Activated CD4-positive, alpha-beta T cell treated with anti-CD3 and anti-CD28 coated beads, Interleukin-2, amount 10 ng/mL, durations not matched to agents 24 days and 14 days (primary cell): ENCODE measurements at regions of chr12 and their contacts with region 1.

Region 1: DNA sequence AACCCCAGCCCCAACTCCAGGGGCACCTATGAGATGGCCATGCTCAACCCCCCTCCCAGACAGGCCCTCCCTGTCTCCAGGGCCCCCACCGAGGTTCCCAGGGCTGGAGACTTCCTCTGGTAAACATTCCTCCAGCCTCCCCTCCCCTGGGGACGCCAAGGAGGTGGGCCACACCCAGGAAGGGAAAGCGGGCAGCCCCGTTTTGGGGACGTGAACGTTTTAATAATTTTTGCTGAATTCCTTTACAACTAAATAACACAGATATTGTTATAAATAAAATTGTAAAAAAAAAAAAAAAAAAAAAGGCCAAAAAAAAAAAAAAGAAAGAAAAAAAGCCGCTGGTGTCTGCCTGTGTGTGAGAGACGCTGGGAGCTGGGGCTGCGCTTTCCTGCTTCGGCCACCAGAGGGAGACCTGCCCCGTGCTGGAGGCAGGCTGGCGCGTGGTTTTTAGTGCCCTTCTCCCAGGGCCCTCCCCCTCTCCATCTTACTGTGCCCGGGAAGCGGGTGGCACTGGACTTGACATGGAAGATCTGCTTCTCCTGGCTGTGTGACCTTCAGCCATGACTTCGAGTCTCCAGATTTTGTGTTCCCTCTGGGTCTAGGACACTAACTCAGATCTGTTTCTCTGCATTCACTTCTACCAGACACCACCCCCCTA is 3.4 kb upstream of the NXPH4 start:
- DNase-seq: peak; percentile 95
- H3K4me3 Mint-ChIP-seq: peak overlapping the region; percentile 36
- H3K27ac Mint-ChIP-seq: no peak overlapping the region
- H3K4me1 Mint-ChIP-seq: peaks cover 22% of the 10 kb centered on the region
- H3K27me3 Mint-ChIP-seq: peaks cover 37% of the 10 kb centered on the region

Region 2: DNA sequence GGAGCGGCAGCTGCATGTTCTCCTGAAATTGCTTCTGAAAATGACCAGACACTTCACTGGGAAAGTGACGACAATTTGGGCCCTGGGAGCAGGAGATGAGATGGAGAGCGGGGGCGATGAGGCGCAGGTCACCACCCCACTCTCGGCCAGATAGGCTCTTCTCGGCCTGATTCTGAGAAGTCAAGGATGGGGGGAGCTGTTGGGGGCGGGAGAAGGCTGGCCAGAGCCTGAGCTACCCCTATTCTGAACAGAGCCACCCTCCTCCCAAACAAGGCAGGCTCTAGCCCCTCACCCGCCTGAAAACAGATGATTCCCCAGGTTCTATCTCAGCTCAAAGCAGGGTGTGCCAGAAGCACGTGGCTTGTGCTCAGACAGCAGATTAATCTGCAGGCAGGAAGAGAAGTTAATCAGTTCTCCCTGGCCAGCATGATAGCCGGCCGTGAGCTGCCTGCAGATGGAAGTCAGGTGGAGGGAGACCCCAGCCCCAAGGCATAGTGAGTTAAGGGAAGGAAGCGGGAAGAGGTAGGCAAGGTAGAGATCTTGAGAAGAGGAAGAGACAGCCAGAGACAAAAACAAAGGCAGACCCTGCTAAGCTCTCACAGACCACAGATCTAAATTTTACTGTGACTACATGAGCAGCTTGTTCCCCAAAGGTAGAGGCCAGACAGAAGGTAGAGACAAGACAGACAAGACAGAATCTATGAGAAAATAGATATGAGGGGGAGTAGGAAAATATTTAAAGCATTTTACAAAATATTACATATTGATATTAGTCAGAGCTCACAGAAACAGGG is 186.0 kb before region 1 on chr12:
- intact Hi-C with region 1: no loop called
- DNase-seq: no peak
- H3K4me3 Mint-ChIP-seq: peak overlapping the region; percentile 2
- H3K27ac Mint-ChIP-seq: peak overlapping the region; percentile 39
- H3K4me1 Mint-ChIP-seq: peaks cover 32% of the 10 kb centered on the region
- H3K27me3 Mint-ChIP-seq: no peaks in the 10 kb centered on the region

Region 3: DNA sequence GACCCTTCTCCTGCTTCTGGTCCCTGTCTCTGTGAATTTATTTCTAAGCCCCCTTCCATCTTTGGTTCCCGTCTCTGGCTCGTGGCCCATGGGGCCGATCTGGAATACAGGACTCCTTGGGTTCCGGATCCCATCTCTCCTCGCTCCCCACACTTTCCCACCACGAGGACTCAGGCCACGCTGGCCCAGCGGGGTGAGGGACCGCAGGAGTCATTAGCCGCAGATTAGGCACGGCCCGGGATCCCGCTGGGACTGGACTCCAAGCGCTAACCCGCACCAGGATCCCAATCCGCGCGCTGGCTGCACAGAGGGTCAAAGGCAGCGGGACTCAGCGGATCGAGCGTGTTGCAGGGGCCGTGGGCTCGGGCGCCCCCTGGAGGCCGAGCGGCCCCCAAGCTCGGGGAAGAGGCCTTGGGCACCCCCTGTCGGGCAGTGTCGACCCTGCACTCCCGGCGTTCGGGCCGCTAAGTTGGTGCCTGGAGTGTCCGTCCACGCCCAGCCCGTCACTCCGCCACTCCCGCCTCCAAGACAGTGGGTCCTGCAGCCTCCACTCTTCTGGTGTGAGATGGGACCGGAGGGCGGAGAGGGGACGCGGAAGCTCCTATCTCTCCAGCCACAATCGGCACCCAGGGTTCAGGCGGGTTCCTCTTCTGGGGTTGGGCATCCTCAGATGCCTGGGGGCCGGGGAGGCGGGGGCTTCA is 25.8 kb after region 1 on chr12:
- intact Hi-C with region 1: loop called (anchors 1 kb)
- DNase-seq: peak; percentile 97
- H3K4me3 Mint-ChIP-seq: peak overlapping the region; percentile 92
- H3K27ac Mint-ChIP-seq: peak overlapping the region; percentile 91
- H3K4me1 Mint-ChIP-seq: peaks cover 64% of the 10 kb centered on the region
- H3K27me3 Mint-ChIP-seq: peaks cover 41% of the 10 kb centered on the region

Region 4: DNA sequence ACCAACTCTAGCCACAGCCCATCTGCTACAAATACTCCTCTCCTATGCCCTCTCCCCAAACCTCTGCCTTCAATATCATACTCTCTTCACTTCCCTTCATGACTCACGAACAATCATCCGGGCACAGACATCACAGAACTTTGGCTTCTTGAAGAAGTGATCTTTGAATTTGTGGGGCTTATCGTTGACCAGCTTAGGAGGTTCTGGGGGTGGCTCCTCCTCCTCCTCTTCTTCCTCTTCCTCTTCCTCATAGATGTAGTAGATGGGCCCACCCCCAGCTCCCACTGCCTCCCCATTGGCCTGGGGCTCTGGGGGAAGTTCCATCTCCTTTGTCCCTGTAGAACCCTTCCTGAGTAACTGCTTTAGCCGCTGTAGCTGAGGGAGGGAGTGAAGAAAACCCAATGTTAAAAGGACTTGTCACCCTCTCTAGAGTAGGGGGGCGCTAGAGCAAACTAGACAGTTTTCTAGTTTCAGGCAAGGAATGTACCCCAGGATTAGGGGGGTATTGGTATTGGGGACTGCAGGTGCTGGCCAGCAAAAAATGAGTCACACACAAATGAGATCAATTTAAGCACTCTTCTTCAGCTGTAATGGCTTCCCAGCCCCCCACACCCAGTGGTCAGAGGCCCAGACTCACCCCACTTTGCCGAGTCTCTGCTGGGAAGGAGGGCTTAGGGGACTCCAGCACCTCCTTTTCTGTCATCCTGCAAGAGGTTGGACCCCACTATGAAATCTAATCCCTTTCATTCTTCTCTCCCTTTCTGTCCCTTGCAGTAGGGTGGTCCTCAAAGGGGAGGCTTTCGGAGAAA is 36.0 kb after region 1 on chr12:
- intact Hi-C with region 1: no loop called
- DNase-seq: no peak
- H3K4me3 Mint-ChIP-seq: peak overlapping the region; percentile 20
- H3K27ac Mint-ChIP-seq: peak overlapping the region; percentile 22
- H3K4me1 Mint-ChIP-seq: peaks cover 6% of the 10 kb centered on the region
- H3K27me3 Mint-ChIP-seq: no peaks in the 10 kb centered on the region